Sigmoid colon (tissue), 7 donors: ENCODE measurements at regions of chr16 and their contacts with region 1.

Region 1: GRCh38 chr16:4414187-4414917 is 2.0 kb downstream of the CORO7 start:
- DNase-seq: no peak
- H3K4me3 ChIP-seq: no peak overlapping the region
- H3K27ac ChIP-seq: no peak overlapping the region
- H3K4me1 ChIP-seq: peaks cover 0 to 49% (median 27%) of the 10 kb centered on the region in 4 donors
- H3K27me3 ChIP-seq: no peaks in the 10 kb centered on the region
- CTCF ChIP-seq: no peak
- EP300 ChIP-seq: no peak
- POLR2A ChIP-seq: no peak

Region 2: GRCh38 chr16:4271176-4272066 is 142.9 kb before region 1 on chr16:
- intact Hi-C with region 1: loop called (anchors 5 kb)
- DNase-seq: peak; percentile 94
- H3K4me3 ChIP-seq: peak overlapping the region; percentile 66 to 96 (median 88)
- H3K27ac ChIP-seq: peak overlapping the region; percentile 89 to 96 (median 94)
- H3K4me1 ChIP-seq: peaks cover 0 to 26% (median 15%) of the 10 kb centered on the region in 4 donors
- H3K27me3 ChIP-seq: no peaks in the 10 kb centered on the region
- CTCF ChIP-seq: no peak
- EP300 ChIP-seq: no peak
- POLR2A ChIP-seq: no peak